BJ (cell line): ENCODE measurements at regions of chr12 and their contacts with region 1.

Region 1: GRCh38 chr12:109264095-109264942 is 44.8 kb downstream of the FOXN4 start:
- DNase-seq: no peak
- H3K4me3 ChIP-seq: no peak overlapping the region
- H3K27me3 ChIP-seq: no peaks in the 10 kb centered on the region
- CTCF ChIP-seq: peak; percentile 83

Region 2: DNA sequence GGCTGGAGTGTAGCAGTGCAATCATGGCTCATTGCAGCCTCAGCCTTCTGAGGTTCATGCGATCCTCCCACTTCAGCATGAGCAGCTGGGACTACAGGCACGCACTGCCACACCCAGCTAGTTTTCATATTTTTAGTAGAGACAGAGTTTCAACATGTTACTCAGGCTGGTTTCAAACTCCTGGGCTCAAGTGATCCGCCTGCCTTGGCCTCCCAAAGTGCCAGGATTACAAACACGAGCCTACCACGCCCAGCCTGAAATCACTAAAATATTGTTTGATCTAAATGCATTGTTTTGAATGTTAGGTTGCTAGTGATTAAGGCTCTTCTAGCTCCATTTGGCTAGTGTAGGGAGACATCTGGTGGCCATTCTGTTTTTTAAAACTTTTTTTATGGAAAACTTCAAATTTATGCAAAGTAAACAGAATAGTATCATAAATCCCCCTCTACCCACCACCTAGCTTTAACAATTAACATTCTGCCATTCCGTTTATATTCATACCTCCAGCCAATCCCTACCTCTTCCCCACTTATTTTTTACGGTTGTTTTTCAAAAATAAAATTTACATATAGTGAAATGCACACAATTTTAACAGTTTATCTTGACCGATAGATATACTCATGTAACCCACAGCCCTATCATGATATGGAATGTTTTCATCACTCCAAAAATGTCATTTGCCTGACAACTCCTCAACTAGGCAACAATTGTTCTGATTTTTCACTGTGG is 121.2 kb after region 1 on chr12:
- CTCF ChIA-PET with region 1: interaction called, 16 read pairs
- POLR2A ChIA-PET with region 1: no interaction called
- DNase-seq: peak; percentile 27
- H3K4me3 ChIP-seq: no peak overlapping the region
- H3K27me3 ChIP-seq: peaks cover 2% of the 10 kb centered on the region; the same call in 1 of the 2 replicates
- CTCF ChIP-seq: peak; percentile 59

Region 3: DNA sequence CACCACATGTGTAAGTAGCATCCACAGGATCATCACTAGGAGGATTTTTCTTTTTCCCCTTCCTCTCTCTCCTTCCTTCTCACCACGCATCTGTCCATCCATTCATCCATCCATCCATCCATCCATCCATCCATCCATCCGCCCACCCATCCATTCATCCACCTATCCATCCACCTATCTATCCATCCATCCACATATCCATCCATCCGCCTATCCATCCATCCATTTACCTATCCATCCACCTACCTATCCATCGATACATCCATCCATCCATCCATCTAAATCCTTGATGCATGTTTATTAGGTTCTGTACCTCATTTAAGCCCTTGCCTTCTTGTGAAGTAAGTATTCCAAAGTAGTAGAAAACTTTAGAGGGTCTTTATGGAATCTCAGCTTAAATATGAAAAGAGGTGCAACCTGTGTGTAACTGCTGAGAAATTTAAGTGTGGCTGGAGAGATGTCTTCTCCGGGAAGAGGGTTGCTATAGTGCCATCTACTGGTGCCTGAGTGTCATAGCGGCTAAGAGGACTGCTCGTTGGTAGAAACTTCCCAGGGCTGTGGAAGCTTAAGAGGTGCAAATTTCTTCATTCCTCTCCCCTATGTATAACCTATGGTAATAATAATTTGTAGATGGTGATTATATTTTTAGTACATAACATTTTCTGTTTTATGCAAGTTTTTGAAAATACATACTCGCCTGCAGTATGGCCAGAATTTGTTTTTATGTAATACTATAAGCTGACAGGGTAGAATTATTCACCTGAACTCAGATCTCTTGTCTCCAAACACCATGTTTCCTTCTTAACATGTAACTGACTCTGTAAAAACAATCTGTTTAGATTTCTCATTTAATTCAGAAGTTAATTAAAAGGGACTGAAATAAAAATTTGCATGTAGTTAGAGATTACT is 129.4 kb after region 1 on chr12:
- CTCF ChIA-PET with region 1: interaction called, 25 read pairs
- POLR2A ChIA-PET with region 1: no interaction called
- DNase-seq: no peak
- H3K4me3 ChIP-seq: no peak overlapping the region
- H3K27me3 ChIP-seq: no peaks in the 10 kb centered on the region
- CTCF ChIP-seq: peak; percentile 93